ENCODE measurements at regions of chr4 and their contacts with region 1.

Region 1: DNA sequence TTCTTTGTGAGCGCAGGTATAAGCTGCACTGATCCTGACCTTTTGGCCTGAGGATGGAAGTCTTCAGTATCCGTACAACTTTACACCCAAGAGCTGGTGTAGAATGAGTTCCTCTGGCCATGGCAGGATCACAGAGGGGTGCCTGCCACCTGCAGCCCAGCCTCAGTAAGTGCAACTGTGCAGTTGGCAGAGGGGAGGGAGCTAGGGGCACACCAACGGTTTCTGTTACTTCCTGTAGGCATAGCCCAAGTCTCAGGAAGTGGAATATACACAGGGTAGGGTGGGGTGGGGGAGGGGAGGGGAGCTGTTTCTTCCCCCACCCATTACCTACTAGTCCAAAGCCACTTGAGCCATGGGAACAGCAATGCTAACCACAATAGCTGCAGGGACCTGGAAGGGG is 85.4 kb upstream of the GBA3 start:
- DNase-seq: peak; percentile 77
- H3K4me3 Mint-ChIP-seq: no peak overlapping the region
- H3K27ac Mint-ChIP-seq: no peak overlapping the region
- H3K4me1 Mint-ChIP-seq: peaks cover 29% of the 10 kb centered on the region
- H3K27me3 Mint-ChIP-seq: no peaks in the 10 kb centered on the region

Region 2: DNA sequence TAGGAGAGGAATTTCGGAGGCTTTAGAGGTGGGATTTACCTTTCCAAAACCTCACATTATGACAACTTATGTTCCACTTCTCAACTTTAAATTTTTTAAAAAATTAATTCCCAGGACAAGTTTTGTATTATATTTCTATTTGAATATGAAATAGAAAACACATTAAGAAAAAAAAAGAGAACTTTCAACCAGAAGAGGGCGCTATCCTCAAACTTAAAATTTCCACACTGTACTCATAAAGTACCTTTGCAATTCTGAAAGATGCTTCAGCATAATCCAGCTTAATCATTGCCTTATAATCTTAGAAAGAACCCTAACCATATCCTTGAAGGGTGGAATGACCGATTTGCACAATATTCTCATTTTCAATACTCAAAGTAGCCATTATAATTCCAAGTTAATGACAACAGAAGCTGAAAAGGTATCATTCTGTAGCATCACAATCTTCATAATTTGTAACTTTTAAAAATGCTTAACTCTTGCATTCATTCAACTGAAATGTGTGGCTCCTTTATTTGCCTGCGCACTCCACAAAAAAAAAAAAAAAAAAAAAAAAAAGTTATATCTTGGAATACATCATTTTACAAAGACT is 816.8 kb before region 1 on chr4:
- CTCF ChIA-PET with region 1: no interaction called
- intact Hi-C with region 1: loop called (anchors 1 kb)
- DNase-seq: no peak
- H3K4me3 Mint-ChIP-seq: no peak overlapping the region
- H3K27ac Mint-ChIP-seq: no peak overlapping the region
- H3K4me1 Mint-ChIP-seq: no peaks in the 10 kb centered on the region
- H3K27me3 Mint-ChIP-seq: peaks cover 1% of the 10 kb centered on the region

Region 3: DNA sequence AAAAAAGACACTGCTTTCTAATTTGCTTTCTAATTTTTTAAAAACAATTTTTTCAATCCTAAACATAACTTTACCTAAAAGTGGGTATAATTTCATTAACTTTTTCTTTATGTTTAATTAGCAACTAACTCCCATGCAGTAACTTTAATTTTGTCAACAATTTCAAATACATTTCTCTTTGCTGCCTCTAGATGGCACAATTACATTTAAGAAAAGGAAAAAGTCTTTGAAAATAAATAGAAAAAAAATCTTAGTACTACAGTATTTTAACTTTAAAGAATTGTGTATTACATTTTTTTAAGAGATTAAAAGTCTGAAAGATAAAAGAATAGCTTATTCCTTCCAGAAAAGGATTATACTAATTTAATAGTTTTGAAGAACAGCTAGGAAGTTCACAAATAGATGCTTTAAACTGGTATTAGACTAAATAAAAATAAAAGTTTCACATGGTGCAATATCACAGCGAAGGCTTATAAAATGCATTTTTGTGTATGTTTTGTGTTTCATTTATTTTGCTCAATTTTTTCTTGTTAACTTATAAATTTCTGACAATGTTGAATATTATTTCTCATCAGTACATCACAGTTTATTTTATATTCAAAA is 196.6 kb before region 1 on chr4:
- CTCF ChIA-PET with region 1: interaction called, 17 read pairs
- intact Hi-C with region 1: loop called (anchors 1 kb)
- DNase-seq: no peak
- H3K4me3 Mint-ChIP-seq: no peak overlapping the region
- H3K27ac Mint-ChIP-seq: no peak overlapping the region
- H3K4me1 Mint-ChIP-seq: no peaks in the 10 kb centered on the region
- H3K27me3 Mint-ChIP-seq: no peaks in the 10 kb centered on the region

Region 4: DNA sequence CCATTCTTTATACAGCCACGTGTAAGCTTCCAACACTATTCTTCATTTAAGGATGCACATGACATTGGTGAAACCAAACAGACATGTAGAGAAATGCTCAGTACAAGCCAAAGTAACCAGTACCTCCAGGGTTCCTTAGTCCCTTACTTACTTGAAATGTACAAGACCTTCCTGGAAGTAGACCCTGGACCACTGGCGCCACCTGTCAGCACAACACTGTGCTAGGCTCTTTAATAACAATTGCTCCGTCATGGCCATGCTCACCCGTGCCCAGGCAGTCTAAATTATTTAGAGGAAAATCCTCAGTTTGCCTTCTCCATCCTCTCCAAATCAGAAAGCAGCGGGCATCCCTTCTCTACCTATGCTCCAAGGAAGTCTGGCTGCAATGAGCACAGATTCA is 144.2 kb before region 1 on chr4:
- CTCF ChIA-PET with region 1: interaction called, 3 read pairs
- intact Hi-C with region 1: loop called (anchors 1 kb)
- DNase-seq: peak; percentile 64
- H3K4me3 Mint-ChIP-seq: no peak overlapping the region
- H3K27ac Mint-ChIP-seq: no peak overlapping the region
- H3K4me1 Mint-ChIP-seq: peaks cover 8% of the 10 kb centered on the region
- H3K27me3 Mint-ChIP-seq: no peaks in the 10 kb centered on the region

Region 5: DNA sequence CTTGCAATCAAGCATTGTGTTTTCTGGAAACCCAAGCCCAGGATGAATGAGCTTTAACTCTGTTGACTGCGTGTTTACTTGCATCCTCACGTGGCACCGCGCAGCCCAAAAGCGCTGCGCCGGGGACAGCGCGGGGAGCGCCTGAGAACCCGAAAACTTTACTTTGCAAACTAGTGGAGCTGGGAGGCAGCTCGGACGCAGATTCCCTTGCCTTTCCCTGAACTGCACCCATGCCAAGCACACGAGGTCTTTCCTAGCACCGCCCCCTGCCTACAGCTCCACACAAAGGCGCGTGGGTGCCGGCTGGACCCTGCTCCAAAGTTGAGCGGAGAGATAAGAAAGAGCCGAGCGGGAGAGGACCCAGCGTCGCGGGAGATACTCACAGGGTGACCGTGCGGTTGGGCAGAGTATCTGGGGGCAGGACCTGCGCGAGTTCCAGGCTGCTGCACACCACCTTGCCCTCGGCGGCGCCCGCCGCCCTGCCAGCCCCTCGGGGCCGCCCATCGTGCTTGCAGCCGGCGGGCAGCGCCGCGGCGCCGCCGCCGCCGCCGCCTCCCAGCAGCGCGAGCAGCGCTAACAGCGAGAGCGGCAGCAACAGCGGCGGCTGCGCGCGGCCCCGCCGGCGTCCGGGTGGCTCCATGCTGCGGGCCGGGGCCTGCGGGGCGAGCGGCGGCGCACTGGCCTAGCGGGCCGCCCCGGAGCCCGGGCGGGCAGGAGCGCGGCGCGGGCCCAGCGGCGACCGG is 92.1 kb before region 1 on chr4:
- CTCF ChIA-PET with region 1: no interaction called
- intact Hi-C with region 1: loop called (anchors 5 kb)
- DNase-seq: peak; percentile 34
- H3K4me3 Mint-ChIP-seq: peak overlapping the region; percentile 97
- H3K27ac Mint-ChIP-seq: peak overlapping the region; percentile 77
- H3K4me1 Mint-ChIP-seq: peaks cover 17% of the 10 kb centered on the region
- H3K27me3 Mint-ChIP-seq: peaks cover 9% of the 10 kb centered on the region

Region 6: DNA sequence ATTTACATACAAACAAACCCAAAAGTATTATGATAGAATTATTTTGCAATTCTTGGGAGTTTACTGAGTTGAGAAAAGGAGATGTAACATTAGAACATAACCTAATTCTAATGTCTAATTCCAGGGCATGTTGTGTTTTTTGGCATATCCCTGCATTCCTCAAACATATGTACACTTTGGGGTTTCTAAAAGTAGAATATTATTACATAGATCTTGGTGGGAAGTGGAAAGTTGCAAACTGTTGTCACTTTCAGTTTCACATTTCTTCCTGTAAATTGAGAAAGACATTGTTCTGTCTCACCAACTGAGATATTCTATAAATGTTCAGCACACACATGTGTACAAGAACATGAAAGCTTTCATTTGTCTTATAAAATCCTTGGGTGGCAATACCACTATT is 60.9 kb after region 1 on chr4:
- CTCF ChIA-PET with region 1: interaction called, 4 read pairs
- intact Hi-C with region 1: loop called (anchors 5 kb)
- DNase-seq: no peak
- H3K4me3 Mint-ChIP-seq: no peak overlapping the region
- H3K27ac Mint-ChIP-seq: peak overlapping the region; percentile 65
- H3K4me1 Mint-ChIP-seq: peaks cover 49% of the 10 kb centered on the region
- H3K27me3 Mint-ChIP-seq: no peaks in the 10 kb centered on the region

Region 7: DNA sequence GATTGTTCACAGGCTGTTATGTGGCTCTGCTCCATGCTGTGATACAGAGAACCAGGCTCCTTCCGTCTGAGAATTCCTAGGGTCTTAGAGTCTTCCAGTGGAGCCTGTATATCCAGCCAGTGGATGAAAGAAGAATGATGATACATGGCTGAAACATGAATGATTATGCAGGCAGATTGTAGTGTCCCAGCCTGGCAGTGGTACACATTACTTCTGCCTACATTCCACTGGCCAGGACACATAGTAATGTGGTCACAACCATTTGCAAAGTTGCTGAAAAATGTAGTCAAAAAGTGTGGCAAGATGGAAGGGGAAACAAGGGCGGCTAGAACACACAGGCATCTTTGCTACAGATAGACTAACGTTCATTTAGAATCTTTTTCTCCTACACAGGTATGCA is 80.9 kb after region 1 on chr4:
- CTCF ChIA-PET with region 1: interaction called, 4 read pairs
- intact Hi-C with region 1: loop called (anchors 1 kb)
- DNase-seq: no peak
- H3K4me3 Mint-ChIP-seq: no peak overlapping the region
- H3K27ac Mint-ChIP-seq: no peak overlapping the region
- H3K4me1 Mint-ChIP-seq: peaks cover 19% of the 10 kb centered on the region
- H3K27me3 Mint-ChIP-seq: no peaks in the 10 kb centered on the region

Region 8: DNA sequence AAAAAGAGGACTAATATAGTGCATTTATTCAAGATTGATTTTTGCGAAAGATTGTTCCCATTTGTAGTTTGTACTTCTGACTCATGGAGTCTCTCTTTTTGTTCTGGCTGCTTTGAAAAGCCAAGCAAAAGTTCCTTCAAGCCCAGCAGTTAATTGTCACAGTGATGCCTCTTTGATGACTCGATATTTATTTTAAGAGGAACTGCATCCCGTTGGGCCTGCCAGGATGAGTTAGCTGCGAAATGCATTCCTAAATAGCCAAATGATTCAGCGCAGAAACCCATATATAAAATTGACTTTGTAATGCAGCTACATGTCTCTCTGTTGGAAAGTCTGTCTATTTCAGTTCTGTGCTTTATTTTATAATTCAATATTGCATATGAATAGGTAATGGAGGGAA is 380.5 kb after region 1 on chr4:
- CTCF ChIA-PET with region 1: no interaction called
- intact Hi-C with region 1: no loop called
- DNase-seq: no peak
- H3K4me3 Mint-ChIP-seq: no peak overlapping the region
- H3K27ac Mint-ChIP-seq: no peak overlapping the region
- H3K4me1 Mint-ChIP-seq: no peaks in the 10 kb centered on the region
- H3K27me3 Mint-ChIP-seq: no peaks in the 10 kb centered on the region

Region 9: GRCh38 chr4:23484689-23485088 is 877.3 kb after region 1 on chr4:
- CTCF ChIA-PET with region 1: no interaction called
- intact Hi-C with region 1: no loop called
- DNase-seq: no peak
- H3K4me3 Mint-ChIP-seq: no peak overlapping the region
- H3K27ac Mint-ChIP-seq: no peak overlapping the region
- H3K4me1 Mint-ChIP-seq: no peaks in the 10 kb centered on the region
- H3K27me3 Mint-ChIP-seq: peaks cover 2% of the 10 kb centered on the region